CD8-positive, alpha-beta T cell (primary cell): ENCODE measurements at regions of chr2 and their contacts with region 1.

Region 1: DNA sequence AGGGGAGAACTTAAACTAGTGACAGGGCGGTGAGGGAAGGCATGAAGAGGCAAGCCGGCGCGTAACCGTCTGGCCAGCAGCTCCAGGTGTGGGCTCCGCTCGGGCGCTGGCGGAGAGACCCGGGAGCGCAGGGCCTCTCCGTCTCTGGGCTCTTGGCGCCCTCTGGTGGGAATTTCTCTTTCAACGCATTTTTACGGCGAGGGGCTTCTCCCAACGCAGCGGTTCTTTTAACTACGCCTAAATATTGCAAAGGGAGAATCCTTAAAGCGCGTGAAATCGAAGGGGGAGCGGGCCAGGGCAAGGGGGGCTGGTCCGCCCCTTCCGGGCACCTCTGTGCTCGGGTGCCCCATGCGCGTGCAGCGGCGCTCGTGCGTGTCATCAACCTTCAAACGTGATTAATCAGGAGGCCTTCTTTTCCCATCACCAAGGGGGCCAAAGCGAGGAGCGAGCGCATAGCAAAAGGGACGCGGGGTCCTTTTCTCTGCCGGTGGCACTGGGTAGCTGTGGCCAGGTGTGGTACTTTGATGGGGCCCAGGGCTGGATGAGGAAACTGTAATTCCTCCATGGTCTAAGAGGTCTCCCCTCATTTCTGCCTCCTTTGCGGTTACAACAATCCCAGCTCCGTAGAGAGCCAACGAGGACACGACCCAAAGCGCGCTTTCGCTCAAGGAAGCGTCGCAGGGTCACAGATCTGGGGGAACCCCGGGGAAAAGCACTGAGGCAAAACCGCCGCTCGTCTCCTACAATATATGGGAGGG is 762 bp upstream of the GAD1 start:
- DNase-seq: peak in 8 of 9 experiments; percentile 39 to 78 (median 64)
- ATAC-seq: peak; percentile 48
- H3K4me3 ChIP-seq: peak overlapping the region; percentile 38 to 56
- H3K4me3 Mint-ChIP-seq: peak overlapping the region; percentile 59
- H3K27ac ChIP-seq: no peak overlapping the region
- H3K27ac Mint-ChIP-seq: no peak overlapping the region
- H3K4me1 ChIP-seq: peaks cover 57% of the 10 kb centered on the region
- H3K4me1 Mint-ChIP-seq: peaks cover 50% of the 10 kb centered on the region
- H3K27me3 ChIP-seq: peaks cover 54 to 58% of the 10 kb centered on the region in 2 experiments
- H3K27me3 Mint-ChIP-seq: peaks cover 72% of the 10 kb centered on the region
- CTCF ChIP-seq: peak; percentile 74

Region 2: GRCh38 chr2:170235860-170236679 is 579.9 kb before region 1 on chr2:
- CTCF ChIA-PET with region 1: interaction called, 3 read pairs
- POLR2A ChIA-PET with region 1: no interaction called
- intact Hi-C with region 1: loop called (anchors 5 kb)
- DNase-seq: peak in 2 of 9 experiments; percentile 16 to 38
- ATAC-seq: no peak
- H3K4me3 ChIP-seq: no peak overlapping the region
- H3K4me3 Mint-ChIP-seq: no peak overlapping the region
- H3K27ac ChIP-seq: no peak overlapping the region
- H3K27ac Mint-ChIP-seq: no peak overlapping the region
- H3K4me1 ChIP-seq: no peaks in the 10 kb centered on the region
- H3K4me1 Mint-ChIP-seq: no peaks in the 10 kb centered on the region
- H3K27me3 ChIP-seq: no peaks in the 10 kb centered on the region
- H3K27me3 Mint-ChIP-seq: peaks cover 18% of the 10 kb centered on the region
- CTCF ChIP-seq: no peak

Region 3: DNA sequence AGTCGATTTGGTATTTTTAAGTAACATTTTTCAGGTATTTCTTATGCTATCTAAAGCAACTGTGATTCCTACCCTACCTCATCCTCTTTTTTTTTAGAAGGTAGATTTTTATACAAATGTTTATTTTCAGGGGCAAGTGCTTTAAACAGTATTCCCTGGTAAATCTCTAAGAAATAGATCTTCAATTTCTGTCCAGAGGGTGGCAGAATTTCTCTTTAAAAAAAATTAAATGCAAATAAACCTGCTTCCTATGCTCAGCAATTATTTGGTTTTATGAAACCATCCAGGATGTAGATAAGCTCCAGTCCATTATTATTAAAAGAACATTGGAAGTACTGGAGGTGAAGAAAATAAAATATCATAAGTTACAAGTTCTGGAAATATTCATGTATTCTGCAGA is 446.0 kb before region 1 on chr2:
- CTCF ChIA-PET with region 1: interaction called, 49 read pairs
- POLR2A ChIA-PET with region 1: no interaction called
- intact Hi-C with region 1: no loop called
- DNase-seq: peak in 2 of 9 experiments; percentile 9 to 28
- ATAC-seq: no peak
- H3K4me3 ChIP-seq: no peak overlapping the region
- H3K4me3 Mint-ChIP-seq: no peak overlapping the region
- H3K27ac ChIP-seq: no peak overlapping the region
- H3K27ac Mint-ChIP-seq: no peak overlapping the region
- H3K4me1 ChIP-seq: peaks cover 13% of the 10 kb centered on the region
- H3K4me1 Mint-ChIP-seq: peaks cover 26% of the 10 kb centered on the region
- H3K27me3 ChIP-seq: peaks cover 0 to 4% of the 10 kb centered on the region in 2 experiments
- H3K27me3 Mint-ChIP-seq: peaks cover 52% of the 10 kb centered on the region
- CTCF ChIP-seq: no peak

Region 4: GRCh38 chr2:170486730-170487129 is 329.2 kb before region 1 on chr2:
- CTCF ChIA-PET with region 1: interaction called, 64 read pairs
- POLR2A ChIA-PET with region 1: no interaction called
- intact Hi-C with region 1: loop called (anchors 1 kb)
- DNase-seq: peak in 2 of 9 experiments; percentile 28 to 48
- ATAC-seq: no peak
- H3K4me3 ChIP-seq: no peak overlapping the region
- H3K4me3 Mint-ChIP-seq: no peak overlapping the region
- H3K27ac ChIP-seq: no peak overlapping the region
- H3K27ac Mint-ChIP-seq: no peak overlapping the region
- H3K4me1 ChIP-seq: no peaks in the 10 kb centered on the region
- H3K4me1 Mint-ChIP-seq: no peaks in the 10 kb centered on the region
- H3K27me3 ChIP-seq: no peaks in the 10 kb centered on the region
- H3K27me3 Mint-ChIP-seq: peaks cover 2% of the 10 kb centered on the region
- CTCF ChIP-seq: no peak

Region 5: DNA sequence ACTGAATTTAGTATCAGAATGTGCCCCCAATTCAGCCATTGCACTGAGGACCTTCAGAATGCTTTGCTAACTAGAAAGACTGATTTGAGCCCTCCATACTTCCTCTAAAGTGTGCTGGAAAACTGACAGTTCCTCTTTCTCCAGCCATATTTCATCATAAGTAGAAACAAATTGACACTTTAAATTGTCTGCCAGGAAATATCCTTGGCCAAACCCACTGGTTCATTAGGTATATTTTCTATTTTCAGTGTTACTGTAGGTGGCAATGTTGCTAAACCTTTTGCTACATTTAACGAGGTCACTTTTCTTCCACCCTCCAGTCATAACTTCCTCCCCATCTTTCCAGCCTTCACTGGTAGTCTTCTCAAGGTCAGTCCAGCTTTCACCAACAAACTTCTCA is 79.3 kb before region 1 on chr2:
- CTCF ChIA-PET with region 1: interaction called, 6 read pairs
- POLR2A ChIA-PET with region 1: no interaction called
- intact Hi-C with region 1: loop called in 1 of 2 experiments (anchors 2 kb)
- DNase-seq: peak in 1 of 9 experiments; percentile 7
- ATAC-seq: no peak
- H3K4me3 ChIP-seq: no peak overlapping the region
- H3K4me3 Mint-ChIP-seq: no peak overlapping the region
- H3K27ac ChIP-seq: no peak overlapping the region
- H3K27ac Mint-ChIP-seq: no peak overlapping the region
- H3K4me1 ChIP-seq: no peaks in the 10 kb centered on the region
- H3K4me1 Mint-ChIP-seq: no peaks in the 10 kb centered on the region
- H3K27me3 ChIP-seq: no peaks in the 10 kb centered on the region
- H3K27me3 Mint-ChIP-seq: peaks cover 21% of the 10 kb centered on the region
- CTCF ChIP-seq: no peak

Region 6: DNA sequence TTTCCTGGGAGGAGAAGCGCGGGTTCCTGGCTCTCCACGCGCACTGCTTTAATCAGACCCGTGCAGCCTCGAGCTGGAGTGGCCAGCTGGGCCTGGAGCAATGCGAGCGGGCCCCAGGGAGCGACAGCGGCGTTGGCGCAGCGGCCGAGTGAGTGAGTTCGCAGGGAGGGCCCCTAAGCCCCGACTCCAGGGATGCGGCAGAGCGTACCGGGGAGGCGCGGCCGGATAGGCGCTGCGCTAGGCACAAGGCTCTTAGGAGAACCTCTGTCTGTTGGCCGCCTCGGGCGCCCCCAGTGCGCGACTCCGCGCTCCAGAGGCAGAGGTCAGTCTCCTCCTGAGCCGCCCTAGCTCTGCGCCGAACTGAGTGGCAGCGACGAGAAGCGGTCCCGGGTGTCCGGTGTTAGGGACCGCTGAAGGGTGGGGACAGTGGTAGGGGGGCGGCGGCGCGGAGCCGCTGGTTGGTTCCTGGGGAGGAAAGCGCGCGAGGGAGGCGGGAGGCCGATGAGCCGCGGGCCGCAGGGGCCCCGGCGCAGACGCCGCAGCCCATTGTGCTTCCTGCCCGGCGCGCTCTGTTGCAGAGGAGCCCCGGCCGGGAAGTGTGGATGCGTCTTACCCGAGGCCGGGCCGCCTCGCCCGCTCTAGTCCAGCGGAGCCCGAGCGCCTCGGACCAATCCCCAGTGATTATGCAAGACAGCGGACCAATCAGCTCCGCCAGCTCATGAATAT is 1269.0 kb after region 1 on chr2:
- CTCF ChIA-PET with region 1: no interaction called
- POLR2A ChIA-PET with region 1: no interaction called
- intact Hi-C with region 1: loop called in 1 of 2 experiments (anchors 5 kb)
- DNase-seq: peak in 3 of 9 experiments; percentile 56 to 73 (median 59)
- ATAC-seq: peak; percentile 70
- H3K4me3 ChIP-seq: peak overlapping the region; percentile 13 to 33
- H3K4me3 Mint-ChIP-seq: peak overlapping the region; percentile 74
- H3K27ac ChIP-seq: no peak overlapping the region
- H3K27ac Mint-ChIP-seq: peak overlapping the region; percentile 52
- H3K4me1 ChIP-seq: peaks cover 48% of the 10 kb centered on the region
- H3K4me1 Mint-ChIP-seq: peaks cover 45% of the 10 kb centered on the region
- H3K27me3 ChIP-seq: peaks cover 95 to 97% of the 10 kb centered on the region in 2 experiments
- H3K27me3 Mint-ChIP-seq: peaks cover 91% of the 10 kb centered on the region
- CTCF ChIP-seq: no peak